K562 (cell line): ENCODE measurements at regions of chr3 and their contacts with region 1.

Region 1: GRCh38 chr3:33787328-33788009 is 11.0 kb upstream of the PDCD6IP start:
- DNase-seq: peak; percentile 50 to 88 (median 64)
- ATAC-seq: peak; percentile 85
- H3K4me3 ChIP-seq: peak overlapping the region; percentile 13; the same call in 1 of the 2 replicates
- H3K27ac ChIP-seq: no peak overlapping the region
- H3K4me1 ChIP-seq: peaks cover 10 to 37% of the 10 kb centered on the region in 2 experiments
- H3K27me3 ChIP-seq: no peaks in the 10 kb centered on the region
- CTCF ChIP-seq: peak; percentile 90 to 95 (median 91)
- EP300 ChIP-seq: no peak
- POLR2A ChIP-seq: no peak
- RAD21 ChIP-seq: peak; percentile 94 to 95

Region 2: GRCh38 chr3:33131331-33132018 is 656.0 kb before region 1 on chr3:
- CTCF ChIA-PET with region 1: interaction called, 3 read pairs
- POLR2A ChIA-PET with region 1: no interaction called
- in situ Hi-C with region 1: loop called (anchors 5 kb)
- intact Hi-C with region 1: loop called (anchors 5 kb)
- DNase-seq: peak; percentile 71 to 78 (median 74)
- ATAC-seq: peak; percentile 94
- H3K4me3 ChIP-seq: no peak overlapping the region
- H3K27ac ChIP-seq: no peak overlapping the region
- H3K4me1 ChIP-seq: no peaks in the 10 kb centered on the region
- H3K27me3 ChIP-seq: no peaks in the 10 kb centered on the region
- CTCF ChIP-seq: peak; percentile 76 to 91 (median 82)
- EP300 ChIP-seq: no peak
- POLR2A ChIP-seq: no peak
- RAD21 ChIP-seq: peak; percentile 85 to 92

Region 3: GRCh38 chr3:33440323-33441232 is 346.9 kb before region 1 on chr3 and contains the start of gene UBP1:
- CTCF ChIA-PET with region 1: no interaction called
- POLR2A ChIA-PET with region 1: interaction called, 4 read pairs
- in situ Hi-C with region 1: no loop called
- intact Hi-C with region 1: loop called (anchors 5 kb)
- DNase-seq: peak; percentile 96 to 100 (median 98)
- ATAC-seq: peak; percentile 92
- H3K4me3 ChIP-seq: peak within 1 kb of the TSS; percentile 89
- H3K27ac ChIP-seq: peak within 1 kb of the TSS; percentile 90
- H3K4me1 ChIP-seq: peaks cover 9 to 23% of the 10 kb centered on the region in 2 experiments; a peak in 4 of 5 replicates
- H3K27me3 ChIP-seq: no peaks in the 10 kb centered on the region
- CTCF ChIP-seq: peak in 1 of 3 experiments; percentile 32; a peak in 1 of 6 replicates
- EP300 ChIP-seq: no peak
- POLR2A ChIP-seq: peak; percentile 99
- RAD21 ChIP-seq: no peak
- polyA plus RNA-seq, gene UBP1: 13.6 to 17.4 TPM

Region 4: DNA sequence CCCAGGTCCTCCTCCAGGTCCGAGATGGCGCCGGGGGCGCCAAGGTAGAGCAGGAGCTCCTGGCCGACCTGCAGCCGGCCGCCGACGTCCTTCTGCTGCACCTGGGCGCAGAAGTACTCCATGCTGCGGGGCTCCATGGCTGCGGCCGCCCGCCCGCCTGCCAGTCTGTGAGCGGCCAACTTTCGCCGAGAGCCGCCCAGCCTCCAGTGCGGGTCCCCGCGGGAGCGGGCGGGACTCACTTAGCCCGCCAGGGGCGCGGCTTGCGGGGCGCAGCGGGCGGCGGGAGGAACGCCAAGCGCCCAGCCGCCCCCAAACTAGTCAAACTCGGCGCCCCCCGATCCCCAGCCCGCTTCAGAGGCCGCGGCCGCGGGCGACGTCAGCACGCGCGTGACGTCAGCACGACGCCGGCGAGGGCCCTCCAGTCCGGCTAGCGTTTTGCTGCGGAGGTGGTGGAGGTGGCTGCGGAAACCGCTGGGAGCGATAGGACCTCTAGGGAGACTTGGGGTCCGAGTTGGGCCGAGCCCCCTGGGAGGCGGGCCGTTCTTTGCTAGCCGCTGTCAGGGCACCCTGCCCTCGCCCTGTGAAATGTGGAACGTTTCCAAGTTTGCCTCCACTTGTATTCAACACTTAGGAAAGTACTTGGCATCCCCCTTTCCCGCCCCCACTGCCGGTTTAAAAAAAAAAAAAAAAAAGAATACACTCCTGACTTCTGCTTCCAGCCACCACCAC is 69.4 kb before region 1 on chr3 and contains the start of gene CLASP2:
- CTCF ChIA-PET with region 1: no interaction called
- POLR2A ChIA-PET with region 1: no interaction called
- in situ Hi-C with region 1: no loop called
- intact Hi-C with region 1: loop called (anchors 1 kb)
- DNase-seq: peak; percentile 93 to 96 (median 94)
- ATAC-seq: peak; percentile 92
- H3K4me3 ChIP-seq: peak within 1 kb of the TSS; percentile 75
- H3K27ac ChIP-seq: peak within 1 kb of the TSS; percentile 88
- H3K4me1 ChIP-seq: peaks cover 5 to 14% of the 10 kb centered on the region in 2 experiments; a peak in 4 of 5 replicates
- H3K27me3 ChIP-seq: no peaks in the 10 kb centered on the region
- CTCF ChIP-seq: peak in 1 of 3 experiments; percentile 1; a peak in 1 of 6 replicates
- EP300 ChIP-seq: peak; percentile 40
- POLR2A ChIP-seq: peak; percentile 93
- RAD21 ChIP-seq: 0 out of 4 replicates have a peak, but pooled peaks of 1 of the 2 experiments have one; percentile 8
- polyA plus RNA-seq, gene CLASP2: 13.5 to 17.4 TPM

Region 5: DNA sequence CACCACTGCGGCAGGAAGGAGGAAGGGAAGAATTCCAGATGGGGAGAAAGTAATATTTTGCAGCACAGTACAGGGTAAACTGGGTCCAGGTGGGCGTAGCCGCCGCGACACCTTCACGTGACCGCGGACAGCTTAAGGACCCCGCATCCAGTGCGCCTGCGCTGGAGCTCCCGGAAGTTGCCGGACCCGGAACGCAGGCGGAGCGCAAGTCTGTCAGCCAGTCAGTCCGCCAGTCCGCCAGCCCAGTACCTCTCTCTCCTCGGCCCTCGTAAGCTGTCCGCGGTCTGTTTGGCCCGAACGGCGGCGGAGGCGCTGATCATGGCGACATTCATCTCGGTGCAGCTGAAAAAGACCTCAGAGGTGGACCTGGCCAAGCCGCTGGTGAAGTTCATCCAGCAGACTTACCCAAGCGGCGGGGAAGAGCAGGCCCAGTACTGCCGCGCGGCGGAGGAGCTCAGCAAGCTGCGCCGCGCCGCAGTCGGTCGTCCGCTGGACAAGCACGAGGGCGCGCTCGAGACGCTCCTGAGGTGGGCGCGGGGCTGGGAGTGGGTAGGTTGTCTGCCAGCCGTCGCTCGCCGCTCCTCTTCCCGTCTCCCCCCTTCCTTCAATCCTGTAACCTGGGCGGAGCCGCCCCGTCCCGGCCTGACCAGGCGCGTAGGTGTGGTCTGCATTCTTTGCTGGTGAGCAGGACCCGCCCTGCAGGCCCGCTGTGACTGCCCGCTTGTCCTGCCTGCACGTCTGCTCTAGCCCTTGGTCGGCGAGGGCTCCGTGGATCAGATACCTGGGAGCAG is 11.1 kb after region 1 on chr3 and contains the start of gene PDCD6IP:
- CTCF ChIA-PET with region 1: interaction called, 3 read pairs
- POLR2A ChIA-PET with region 1: interaction called, 20 read pairs
- in situ Hi-C with region 1: no loop called
- intact Hi-C with region 1: no loop called
- DNase-seq: peak; percentile 95 to 97 (median 96)
- ATAC-seq: peak; percentile 95
- H3K4me3 ChIP-seq: peak within 1 kb of the TSS; percentile 81
- H3K27ac ChIP-seq: peak within 1 kb of the TSS; percentile 95
- H3K4me1 ChIP-seq: peaks cover 6 to 18% of the 10 kb centered on the region in 2 experiments; a peak in 4 of 5 replicates
- H3K27me3 ChIP-seq: no peaks in the 10 kb centered on the region
- CTCF ChIP-seq: peak; percentile 34 to 66 (median 37); a peak in 5 of 6 replicates
- EP300 ChIP-seq: no peak; the same call in 1 of the 2 replicates
- POLR2A ChIP-seq: peak; percentile 99
- RAD21 ChIP-seq: peak in 1 of 2 experiments; percentile 34
- polyA plus RNA-seq, gene PDCD6IP: 40.2 to 57.6 TPM